AG04449 (cell line): ENCODE measurements at regions of chr11 and their contacts with region 1.

Region 1: GRCh38 chr11:115515647-115516046 is 11.4 kb upstream of the CADM1 start:
- DNase-seq: no peak
- H3K4me3 ChIP-seq: no peak overlapping the region
- CTCF ChIP-seq: no peak

Region 2: GRCh38 chr11:115481528-115481927 is 34.1 kb before region 1 on chr11:
- CTCF ChIA-PET with region 1: no interaction called
- POLR2A ChIA-PET with region 1: no interaction called
- DNase-seq: no peak
- H3K4me3 ChIP-seq: no peak overlapping the region
- CTCF ChIP-seq: no peak

Region 3: DNA sequence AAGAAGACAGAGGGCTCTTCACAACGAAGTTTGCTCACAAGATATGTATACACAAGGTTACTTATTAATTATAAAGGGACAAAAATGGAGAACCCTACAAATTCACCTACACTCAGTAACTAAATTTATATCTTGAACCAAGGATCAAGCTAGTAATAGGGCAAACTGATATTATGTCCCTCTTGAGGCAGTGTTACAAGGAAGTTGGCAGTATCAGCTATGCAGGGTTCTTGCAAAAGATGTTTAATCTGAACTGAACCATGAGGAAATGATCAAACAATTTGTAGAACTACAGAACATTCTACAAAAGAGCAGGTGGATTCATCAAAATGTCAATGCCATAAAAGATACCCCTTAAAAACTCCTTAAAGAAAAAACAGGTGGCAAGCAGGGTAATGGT is 22.2 kb before region 1 on chr11:
- CTCF ChIA-PET with region 1: no interaction called
- POLR2A ChIA-PET with region 1: no interaction called
- DNase-seq: no peak
- H3K4me3 ChIP-seq: no peak overlapping the region
- CTCF ChIP-seq: no peak

Region 4: DNA sequence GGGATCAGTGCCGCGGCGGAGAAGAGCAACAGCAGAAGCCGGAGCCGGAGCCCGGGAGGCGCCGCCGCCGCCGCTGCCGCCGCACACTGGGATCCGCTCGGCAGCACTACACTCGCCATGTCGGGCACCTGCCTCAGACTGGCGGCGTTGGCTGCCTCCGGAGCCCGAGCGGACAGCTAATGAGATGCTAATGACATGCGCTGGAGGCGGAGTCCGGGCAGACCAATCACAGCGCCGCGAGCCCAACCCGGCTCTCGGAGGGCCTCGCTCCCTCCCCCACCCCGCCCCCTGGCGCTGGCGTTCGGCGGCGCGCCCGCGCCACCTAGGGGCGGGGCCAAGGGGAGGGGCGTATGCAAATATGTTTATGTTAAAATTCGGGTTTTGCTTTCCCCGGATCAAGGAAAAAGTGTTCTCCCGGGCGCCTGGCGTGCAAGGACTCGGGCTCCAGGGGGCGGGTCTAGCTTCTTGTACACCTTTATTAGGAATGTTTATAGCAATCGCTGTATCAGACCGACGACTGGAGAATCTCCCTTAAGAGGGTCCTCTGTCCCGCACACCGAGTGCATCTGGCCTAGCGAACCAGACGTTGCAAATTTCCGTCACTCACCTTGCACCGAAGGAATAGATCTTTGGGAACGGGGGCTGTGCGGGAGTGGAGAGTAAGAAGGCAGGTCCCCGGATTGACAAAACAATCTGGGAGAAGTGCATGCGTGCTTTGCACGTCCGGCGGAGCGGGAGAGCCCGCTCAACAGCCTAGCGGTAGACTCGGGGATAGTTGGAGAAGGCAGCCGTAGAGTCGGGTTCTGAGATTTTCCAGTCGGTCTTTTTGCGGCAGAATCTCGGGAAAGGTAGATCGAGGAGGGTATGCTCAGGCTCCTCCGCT is 11.1 kb before region 1 on chr11 and contains the start of gene CADM1:
- CTCF ChIA-PET with region 1: interaction called, 21 read pairs
- POLR2A ChIA-PET with region 1: no interaction called
- DNase-seq: peak; percentile 52
- H3K4me3 ChIP-seq: peak within 1 kb of the TSS; percentile 89
- CTCF ChIP-seq: peak; percentile 75

Region 5: DNA sequence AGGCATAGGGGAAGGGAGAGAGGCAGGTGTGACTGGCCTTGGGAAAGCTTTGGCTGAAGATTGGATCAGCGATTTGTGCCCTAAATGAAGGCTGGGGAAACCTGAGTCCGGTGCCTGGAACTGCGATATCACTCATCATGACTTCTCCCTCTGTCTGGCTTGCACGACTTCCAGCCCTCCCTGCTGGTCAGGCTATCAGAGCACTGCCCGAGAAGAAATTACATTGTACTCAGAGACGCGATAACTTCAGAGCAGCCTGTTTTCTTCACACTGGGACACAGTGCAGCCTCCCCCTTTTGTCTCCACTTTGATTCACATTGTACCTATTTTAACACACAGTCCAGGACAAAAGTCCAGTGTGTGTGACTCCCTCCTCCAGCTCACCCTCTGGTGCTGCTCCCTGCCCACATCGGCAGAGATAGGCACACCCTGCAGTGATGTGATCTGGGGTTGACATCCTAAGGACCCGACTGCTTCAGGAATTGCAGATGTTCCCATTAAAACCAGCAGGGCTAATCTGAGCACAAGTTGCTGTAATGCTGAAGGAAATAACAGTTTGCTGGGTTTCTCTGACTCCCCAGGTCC is 50.6 kb after region 1 on chr11:
- CTCF ChIA-PET with region 1: no interaction called
- POLR2A ChIA-PET with region 1: no interaction called
- DNase-seq: no peak
- H3K4me3 ChIP-seq: no peak overlapping the region
- CTCF ChIP-seq: no peak

Region 6: GRCh38 chr11:115843111-115843510 is 327.5 kb after region 1 on chr11:
- CTCF ChIA-PET with region 1: no interaction called
- POLR2A ChIA-PET with region 1: no interaction called
- DNase-seq: no peak
- H3K4me3 ChIP-seq: no peak overlapping the region
- CTCF ChIP-seq: no peak